ENCODE measurements at regions of chr22 and their contacts with region 1.

Region 1: GRCh38 chr22:37166675-37167066 is 17.0 kb upstream of the IL2RB start:
- DNase-seq: peak; percentile 80 to 92
- ATAC-seq: peak in 2 of 3 donors; percentile 11 to 44
- H3K4me3 ChIP-seq: peak overlapping the region; percentile 23
- H3K4me3 Mint-ChIP-seq: peak overlapping the region; percentile 95
- H3K27ac ChIP-seq: peak overlapping the region; percentile 68
- H3K27ac Mint-ChIP-seq: peak overlapping the region; percentile 94 to 97
- H3K4me1 ChIP-seq: peaks cover 89% of the 10 kb centered on the region
- H3K4me1 Mint-ChIP-seq: peaks cover 78 to 87% of the 10 kb centered on the region in 2 donors
- H3K27me3 ChIP-seq: no peaks in the 10 kb centered on the region
- H3K27me3 Mint-ChIP-seq: no peaks in the 10 kb centered on the region
- CTCF ChIP-seq: peak; percentile 85

Region 2: DNA sequence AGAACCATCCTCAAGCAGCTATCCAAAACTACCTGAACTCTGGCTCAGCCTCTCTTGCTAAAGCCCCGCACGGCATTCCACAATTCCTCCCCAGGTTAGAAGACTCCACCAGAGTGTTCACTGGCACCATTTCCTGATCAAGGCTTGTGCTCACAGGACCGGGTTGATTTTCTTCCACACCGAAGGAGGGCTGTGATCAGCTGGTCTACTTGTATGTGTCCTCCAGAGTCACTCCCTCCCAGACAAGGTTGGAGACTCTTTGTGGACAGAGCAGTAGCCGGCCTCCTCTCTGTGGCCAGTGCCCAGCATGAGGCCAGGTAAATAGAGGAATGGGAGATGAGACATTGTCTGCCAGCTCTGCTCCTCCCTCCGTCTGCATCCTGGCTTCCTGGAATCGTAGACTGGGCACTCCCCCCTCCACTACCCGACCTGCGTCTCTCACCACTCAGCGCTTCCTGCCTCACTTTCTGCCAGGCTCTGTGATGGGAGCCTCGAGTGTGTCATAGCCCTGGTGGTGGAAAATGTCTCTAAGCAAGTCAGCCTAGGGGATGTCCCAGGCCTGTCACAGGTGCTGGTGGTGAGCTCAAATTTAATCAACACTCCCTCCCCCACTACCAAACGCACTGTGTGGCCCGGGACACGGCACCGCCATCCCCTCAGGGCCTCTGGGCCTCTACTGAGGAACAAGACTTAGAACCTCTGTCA is 44.6 kb before region 1 on chr22:
- intact Hi-C with region 1: loop called (anchors 1 kb)
- DNase-seq: peak; percentile 80 to 98
- ATAC-seq: peak; percentile 88 to 98 (median 92)
- H3K4me3 ChIP-seq: no peak overlapping the region
- H3K4me3 Mint-ChIP-seq: peak overlapping the region; percentile 74
- H3K27ac ChIP-seq: peak overlapping the region; percentile 84
- H3K27ac Mint-ChIP-seq: peak overlapping the region; percentile 94 to 99
- H3K4me1 ChIP-seq: peaks cover 52% of the 10 kb centered on the region
- H3K4me1 Mint-ChIP-seq: peaks cover 40 to 46% of the 10 kb centered on the region in 2 donors
- H3K27me3 ChIP-seq: no peaks in the 10 kb centered on the region
- H3K27me3 Mint-ChIP-seq: no peaks in the 10 kb centered on the region
- CTCF ChIP-seq: no peak

Region 3: GRCh38 chr22:37186228-37186996 is 19.7 kb after region 1 on chr22:
- intact Hi-C with region 1: no loop called
- DNase-seq: peak; percentile 39 to 91
- ATAC-seq: peak; percentile 76 to 84 (median 80)
- H3K4me3 ChIP-seq: no peak overlapping the region
- H3K4me3 Mint-ChIP-seq: peak overlapping the region; percentile 88
- H3K27ac ChIP-seq: peak overlapping the region; percentile 6
- H3K27ac Mint-ChIP-seq: peak overlapping the region; percentile 85 to 86
- H3K4me1 ChIP-seq: peaks cover 65% of the 10 kb centered on the region
- H3K4me1 Mint-ChIP-seq: peaks cover 48 to 58% of the 10 kb centered on the region in 2 donors
- H3K27me3 ChIP-seq: no peaks in the 10 kb centered on the region
- H3K27me3 Mint-ChIP-seq: no peaks in the 10 kb centered on the region
- CTCF ChIP-seq: no peak

Region 4: DNA sequence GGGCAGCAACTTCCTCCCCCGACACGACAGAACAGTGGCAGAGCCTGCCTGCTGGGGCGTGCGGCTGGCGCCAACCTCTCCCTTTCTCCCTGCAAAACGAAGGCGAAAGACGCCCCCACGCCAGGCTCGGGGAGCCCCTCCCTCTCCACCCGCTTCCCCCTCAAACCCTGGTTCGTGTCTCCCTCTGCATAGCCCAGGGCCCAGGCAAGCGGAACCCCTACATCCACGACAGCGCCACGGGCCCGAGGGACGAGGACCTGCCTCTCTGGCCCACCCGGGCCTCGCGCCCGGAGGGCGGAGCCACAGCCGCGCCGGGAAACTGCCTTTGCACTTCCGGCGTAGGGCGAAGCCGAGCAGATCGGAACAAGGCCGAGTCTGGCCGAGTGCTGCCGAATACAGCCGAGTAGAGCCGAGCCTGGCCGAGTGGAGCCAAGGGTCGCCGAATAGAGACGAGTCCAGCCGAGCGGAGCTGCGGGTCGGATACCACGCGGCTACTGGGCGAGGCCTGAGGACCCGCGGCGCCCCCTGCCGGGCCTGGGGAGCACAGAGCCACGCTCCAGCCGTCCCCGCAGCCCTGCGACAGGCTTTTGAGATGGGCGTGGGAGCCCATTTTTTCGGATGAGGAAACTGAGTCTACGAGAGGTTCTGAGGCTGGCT is 32.6 kb after region 1 on chr22:
- intact Hi-C with region 1: loop called (anchors 1 kb)
- DNase-seq: peak; percentile 99 to 100
- ATAC-seq: peak; percentile 96 to 100 (median 96)
- H3K4me3 ChIP-seq: peak overlapping the region; percentile 80
- H3K4me3 Mint-ChIP-seq: peak overlapping the region; percentile 90
- H3K27ac ChIP-seq: peak overlapping the region; percentile 91
- H3K27ac Mint-ChIP-seq: peak overlapping the region; percentile 93 to 97
- H3K4me1 ChIP-seq: peaks cover 34% of the 10 kb centered on the region
- H3K4me1 Mint-ChIP-seq: peaks cover 28 to 40% of the 10 kb centered on the region in 2 donors
- H3K27me3 ChIP-seq: no peaks in the 10 kb centered on the region
- H3K27me3 Mint-ChIP-seq: no peaks in the 10 kb centered on the region
- CTCF ChIP-seq: peak; percentile 85

Region 5: DNA sequence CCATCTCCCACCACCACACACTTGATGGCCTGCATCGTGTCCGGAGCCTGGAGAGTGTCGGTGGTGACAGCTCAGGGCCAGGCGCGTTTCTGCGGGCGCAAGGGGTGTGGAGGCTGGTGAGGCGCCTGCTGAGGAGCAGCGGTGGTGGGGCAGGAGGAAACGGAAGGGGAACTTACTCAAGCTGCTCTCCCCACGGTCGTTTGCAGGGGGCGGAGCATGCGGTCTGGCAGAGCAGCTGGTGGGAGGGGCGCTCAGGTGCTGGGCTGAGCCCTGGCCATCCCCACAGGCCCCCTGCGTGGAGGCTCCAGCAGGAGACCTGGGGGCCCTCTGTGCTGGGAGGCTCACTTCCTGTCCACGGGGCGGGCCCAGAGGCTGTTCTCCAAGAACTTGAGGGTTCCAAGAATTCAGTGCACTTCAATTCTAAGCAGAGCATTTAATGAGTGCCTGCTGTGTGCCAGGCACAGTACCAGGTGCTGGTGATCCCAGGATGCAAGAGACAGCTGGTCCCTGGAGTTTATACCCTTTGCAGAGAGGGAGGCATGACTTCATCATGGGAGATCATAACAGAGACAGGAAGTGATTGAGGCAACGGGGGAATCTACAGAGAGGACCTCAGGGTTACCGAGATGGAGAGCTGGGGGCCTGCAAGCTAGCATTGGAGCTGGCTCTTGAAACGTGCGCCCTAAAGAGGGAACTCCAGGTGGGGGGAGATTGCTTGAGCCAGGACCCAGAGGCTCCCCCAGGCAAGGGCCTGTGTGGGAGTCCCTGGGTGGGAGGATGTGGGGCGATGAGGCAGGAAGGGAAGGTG is 77.6 kb after region 1 on chr22 and contains the start of gene RAC2:
- intact Hi-C with region 1: loop called (anchors 5 kb)
- DNase-seq: peak; percentile 81 to 94
- ATAC-seq: peak; percentile 57 to 78 (median 72)
- H3K4me3 ChIP-seq: peak within 1 kb of the TSS; percentile 89
- H3K4me3 Mint-ChIP-seq: peak within 1 kb of the TSS; percentile 91
- H3K27ac ChIP-seq: peak within 1 kb of the TSS; percentile 82
- H3K27ac Mint-ChIP-seq: peak within 1 kb of the TSS; percentile 93 to 98
- H3K4me1 ChIP-seq: peaks cover 54% of the 10 kb centered on the region
- H3K4me1 Mint-ChIP-seq: peaks cover 45 to 59% of the 10 kb centered on the region in 2 donors
- H3K27me3 ChIP-seq: no peaks in the 10 kb centered on the region
- H3K27me3 Mint-ChIP-seq: no peaks in the 10 kb centered on the region
- CTCF ChIP-seq: no peak
- total RNA-seq, gene RAC2: 647 to 744 (median 741) TPM

Region 6: DNA sequence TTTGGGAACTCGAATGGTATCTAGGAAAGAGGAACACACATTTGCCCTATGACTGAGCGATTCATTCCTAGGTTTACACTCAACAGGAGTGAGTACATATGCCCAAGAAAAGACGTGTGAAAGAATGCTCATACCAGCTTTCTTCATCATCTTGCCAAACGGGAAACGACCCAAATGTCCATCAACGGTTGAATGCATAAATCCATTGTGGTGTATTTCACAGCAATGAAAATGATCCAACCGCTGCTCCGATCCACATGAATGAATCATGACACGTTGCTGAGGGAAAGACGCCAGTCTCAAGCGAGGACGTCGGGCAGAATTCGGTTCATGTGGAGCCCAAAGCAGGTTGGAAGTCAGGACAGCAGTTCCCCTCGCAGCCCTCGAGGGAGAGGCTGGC is 187.2 kb after region 1 on chr22:
- intact Hi-C with region 1: no loop called
- DNase-seq: no peak
- ATAC-seq: no peak
- H3K4me3 ChIP-seq: no peak overlapping the region
- H3K4me3 Mint-ChIP-seq: no peak overlapping the region
- H3K27ac ChIP-seq: no peak overlapping the region
- H3K27ac Mint-ChIP-seq: no peak overlapping the region
- H3K4me1 ChIP-seq: no peaks in the 10 kb centered on the region
- H3K4me1 Mint-ChIP-seq: peaks cover 0 to 6% of the 10 kb centered on the region in 2 donors
- H3K27me3 ChIP-seq: no peaks in the 10 kb centered on the region
- H3K27me3 Mint-ChIP-seq: no peaks in the 10 kb centered on the region
- CTCF ChIP-seq: no peak

Region 7: GRCh38 chr22:37486224-37486845 is 319.7 kb after region 1 on chr22 and contains the start of gene MFNG:
- intact Hi-C with region 1: loop called (anchors 10 kb)
- DNase-seq: peak; percentile 70 to 85
- ATAC-seq: peak; percentile 77 to 85 (median 81)
- H3K4me3 ChIP-seq: peak within 1 kb of the TSS; percentile 91
- H3K4me3 Mint-ChIP-seq: peak within 1 kb of the TSS; percentile 94
- H3K27ac ChIP-seq: peak within 1 kb of the TSS; percentile 85
- H3K27ac Mint-ChIP-seq: peak within 1 kb of the TSS; percentile 95 to 96
- H3K4me1 ChIP-seq: peaks cover 74% of the 10 kb centered on the region
- H3K4me1 Mint-ChIP-seq: peaks cover 59 to 78% of the 10 kb centered on the region in 2 donors
- H3K27me3 ChIP-seq: no peaks in the 10 kb centered on the region
- H3K27me3 Mint-ChIP-seq: no peaks in the 10 kb centered on the region
- CTCF ChIP-seq: no peak
- total RNA-seq, gene MFNG: 75.3 to 111 (median 110) TPM

Measured in natural killer cell (primary cell).